ENCODE measurements at regions of chr11 and their contacts with region 1.

Region 1: DNA sequence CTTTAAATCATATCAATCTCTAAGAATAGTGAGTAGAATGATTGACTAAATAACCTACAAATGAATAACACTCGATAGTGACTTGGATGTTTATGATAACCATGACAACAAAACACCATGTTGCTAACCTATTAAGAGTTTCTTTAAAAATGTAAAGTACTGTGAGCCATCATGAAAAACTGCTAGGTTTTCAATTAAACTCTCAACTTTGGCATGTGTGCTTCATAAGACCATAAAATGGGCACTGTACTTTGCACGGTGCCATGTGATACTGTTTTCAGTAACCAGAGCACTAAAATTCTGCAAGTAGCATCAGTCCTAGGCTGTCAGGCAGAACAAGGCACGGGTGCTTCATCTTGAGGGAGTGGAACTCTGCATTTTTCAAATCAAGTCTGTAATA is 96.2 kb upstream of the TRIM77 start:
- DNase-seq: no peak
- H3K4me3 Mint-ChIP-seq: no peak overlapping the region
- H3K27ac Mint-ChIP-seq: no peak overlapping the region
- H3K4me1 Mint-ChIP-seq: no peaks in the 10 kb centered on the region
- H3K27me3 Mint-ChIP-seq: no peaks in the 10 kb centered on the region
- CTCF ChIP-seq: no peak

Region 2: GRCh38 chr11:89327885-89328284 is 286.0 kb before region 1 on chr11:
- CTCF ChIA-PET with region 1: no interaction called
- intact Hi-C with region 1: loop called (anchors 2 kb)
- DNase-seq: no peak
- H3K4me3 Mint-ChIP-seq: no peak overlapping the region
- H3K27ac Mint-ChIP-seq: no peak overlapping the region
- H3K4me1 Mint-ChIP-seq: no peaks in the 10 kb centered on the region
- H3K27me3 Mint-ChIP-seq: no peaks in the 10 kb centered on the region
- CTCF ChIP-seq: no peak

Region 3: GRCh38 chr11:89477175-89477574 is 136.7 kb before region 1 on chr11:
- CTCF ChIA-PET with region 1: interaction called, 3 read pairs
- intact Hi-C with region 1: loop called (anchors 2 kb)
- DNase-seq: peak; percentile 8
- H3K4me3 Mint-ChIP-seq: no peak overlapping the region
- H3K27ac Mint-ChIP-seq: no peak overlapping the region
- H3K4me1 Mint-ChIP-seq: no peaks in the 10 kb centered on the region
- H3K27me3 Mint-ChIP-seq: no peaks in the 10 kb centered on the region
- CTCF ChIP-seq: no peak

Region 4: GRCh38 chr11:89495956-89496355 is 118.0 kb before region 1 on chr11:
- CTCF ChIA-PET with region 1: no interaction called
- intact Hi-C with region 1: loop called (anchors 5 kb)
- DNase-seq: no peak
- H3K4me3 Mint-ChIP-seq: no peak overlapping the region
- H3K27ac Mint-ChIP-seq: no peak overlapping the region
- H3K4me1 Mint-ChIP-seq: no peaks in the 10 kb centered on the region
- H3K27me3 Mint-ChIP-seq: no peaks in the 10 kb centered on the region
- CTCF ChIP-seq: no peak

Region 5: GRCh38 chr11:89583580-89583979 is 30.3 kb before region 1 on chr11:
- CTCF ChIA-PET with region 1: no interaction called
- intact Hi-C with region 1: no loop called
- DNase-seq: no peak
- H3K4me3 Mint-ChIP-seq: no peak overlapping the region
- H3K27ac Mint-ChIP-seq: no peak overlapping the region
- H3K4me1 Mint-ChIP-seq: no peaks in the 10 kb centered on the region
- H3K27me3 Mint-ChIP-seq: no peaks in the 10 kb centered on the region
- CTCF ChIP-seq: no peak